Activated T-helper 2 cell treated with anti-CD3 and anti-CD28 coated beads, Interferon-gamma antibody, Interleukin-2, Interleukin-4, amounts not matched to agents 10 μg/mL and 5 μg/mL and 100 μg/mL, durations not matched to agents 14 hours and 24 hours and 36 hours (primary cell): ENCODE measurements at regions of chr11 and their contacts with region 1.

Region 1: DNA sequence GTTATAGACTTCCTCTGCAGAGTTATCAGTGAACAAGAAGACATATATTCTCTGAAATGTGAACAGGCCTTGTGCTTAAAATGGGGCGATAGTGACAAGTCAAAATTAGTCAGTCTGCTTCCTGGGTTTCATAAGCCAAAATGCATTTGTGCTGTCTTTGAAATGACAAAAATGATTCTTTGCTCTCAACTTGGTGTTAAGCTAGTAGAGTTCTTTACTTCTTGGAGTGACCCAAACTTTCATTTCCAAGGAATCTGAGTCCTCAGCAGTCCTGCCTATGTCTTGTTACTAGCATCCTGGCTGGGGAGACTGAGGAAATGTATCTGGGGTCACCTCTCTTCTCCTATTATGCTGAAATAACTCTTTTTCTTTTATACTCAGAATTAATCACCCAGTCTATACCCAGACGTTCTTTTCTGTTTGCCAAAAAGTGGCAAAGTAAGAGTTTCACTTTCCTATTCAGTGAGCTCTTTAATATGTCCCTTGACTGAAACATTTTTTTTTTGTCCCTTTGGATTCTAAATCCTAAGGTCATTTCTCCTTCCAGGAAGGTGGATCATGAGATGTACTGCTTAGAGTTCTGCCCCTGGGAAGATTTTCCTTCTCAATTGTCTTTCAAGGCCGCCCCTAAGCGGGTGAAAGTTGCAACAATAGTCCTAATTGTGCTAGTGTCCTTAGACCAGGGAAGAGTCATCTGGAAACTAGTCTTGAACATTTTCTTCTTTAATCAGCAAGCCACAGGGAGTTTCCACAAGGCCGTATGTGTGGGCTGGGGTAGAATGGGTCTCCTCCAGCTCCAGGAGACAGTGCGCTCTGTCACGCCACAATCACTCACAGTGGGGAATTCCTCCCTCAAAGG is 53.0 kb upstream of the RDX start:
- DNase-seq: peak; percentile 58
- H3K4me3 Mint-ChIP-seq: peak overlapping the region; percentile 61
- H3K27ac Mint-ChIP-seq: peak overlapping the region; percentile 96
- H3K4me1 Mint-ChIP-seq: peaks cover 66% of the 10 kb centered on the region
- H3K27me3 Mint-ChIP-seq: no peaks in the 10 kb centered on the region

Region 2: DNA sequence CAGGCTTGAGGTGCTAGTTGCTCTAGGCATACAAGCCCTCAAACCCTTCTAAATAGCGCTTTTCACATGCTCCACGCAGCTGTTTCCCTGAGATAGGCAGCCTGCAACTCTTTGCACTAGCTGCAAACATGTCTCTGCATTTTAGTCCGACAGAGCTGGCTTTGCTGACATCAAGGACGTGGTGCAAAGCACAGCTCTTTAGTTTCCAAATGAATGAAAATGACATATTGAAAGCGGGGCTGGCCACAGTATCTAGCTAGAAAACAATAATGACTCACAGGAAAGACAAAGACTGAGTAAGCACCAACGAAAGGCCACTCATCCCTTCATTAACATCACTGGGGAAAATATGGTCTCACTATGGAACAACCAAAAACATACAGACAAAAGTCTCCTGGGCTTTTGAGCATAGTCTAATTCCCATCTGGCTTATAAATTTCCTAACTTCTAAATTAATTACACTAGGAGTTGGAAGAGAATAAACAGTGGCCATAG is 271.5 kb before region 1 on chr11:
- intact Hi-C with region 1: loop called (anchors 2 kb)
- DNase-seq: peak; percentile 49
- H3K4me3 Mint-ChIP-seq: peak overlapping the region; percentile 47
- H3K27ac Mint-ChIP-seq: peak overlapping the region; percentile 96
- H3K4me1 Mint-ChIP-seq: peaks cover 40% of the 10 kb centered on the region
- H3K27me3 Mint-ChIP-seq: peaks cover 4% of the 10 kb centered on the region

Region 3: DNA sequence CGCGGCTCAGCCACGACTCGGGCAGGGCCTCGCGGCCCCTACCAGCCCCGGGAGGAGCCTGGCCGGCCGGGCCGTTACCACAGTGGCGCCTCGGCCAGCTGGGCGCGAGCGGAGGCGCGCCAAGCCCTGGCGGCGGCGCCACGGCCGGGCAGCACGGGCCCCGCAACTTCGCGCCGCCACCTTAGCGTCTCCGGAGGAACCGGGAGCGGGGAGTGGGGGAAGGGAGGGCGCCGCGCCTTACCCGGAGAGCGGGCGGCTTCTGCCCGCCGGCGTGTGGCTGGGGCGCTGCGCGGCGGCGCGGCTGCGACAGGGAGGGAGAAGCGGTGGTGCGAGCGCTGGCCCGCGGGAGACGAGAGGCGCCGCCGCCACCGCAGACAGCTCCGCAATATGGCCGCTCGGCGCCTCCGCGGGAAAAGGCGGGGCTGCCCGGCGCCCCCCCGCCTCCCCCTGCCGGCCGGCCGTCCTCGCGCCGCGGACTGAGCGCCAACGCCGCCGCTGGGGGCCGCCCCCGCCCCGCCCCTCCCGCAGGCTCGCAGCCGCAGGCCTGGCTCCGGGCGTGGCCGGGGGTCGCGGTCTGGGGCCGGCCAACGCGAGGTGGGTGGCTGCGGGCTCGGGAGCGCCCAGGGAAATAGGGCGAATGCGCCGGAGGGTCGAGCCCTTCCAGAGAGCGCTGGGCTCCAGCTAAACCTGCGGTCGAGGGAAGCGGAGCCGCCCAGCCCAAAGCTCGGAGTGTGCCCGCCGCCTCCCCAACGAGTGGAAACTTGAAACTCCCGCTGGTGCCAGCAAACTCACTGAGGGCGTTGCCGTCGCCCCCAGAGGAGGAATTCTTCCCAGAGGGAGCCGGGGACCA is 52.9 kb before region 1 on chr11 and contains the start of gene RDX:
- intact Hi-C with region 1: loop called (anchors 1 kb)
- DNase-seq: peak; percentile 56
- H3K4me3 Mint-ChIP-seq: peak within 1 kb of the TSS; percentile 95
- H3K27ac Mint-ChIP-seq: peak within 1 kb of the TSS; percentile 63
- H3K4me1 Mint-ChIP-seq: peaks cover 43% of the 10 kb centered on the region
- H3K27me3 Mint-ChIP-seq: no peaks in the 10 kb centered on the region
- total RNA-seq, gene RDX: 63.3 and 64.8 TPM in 2 replicates

Region 4: GRCh38 chr11:110327508-110327907 is 21.9 kb before region 1 on chr11:
- intact Hi-C with region 1: loop called (anchors 1 kb)
- DNase-seq: no peak
- H3K4me3 Mint-ChIP-seq: peak overlapping the region; percentile 87
- H3K27ac Mint-ChIP-seq: peak overlapping the region; percentile 89
- H3K4me1 Mint-ChIP-seq: peaks cover 34% of the 10 kb centered on the region
- H3K27me3 Mint-ChIP-seq: no peaks in the 10 kb centered on the region

Region 5: DNA sequence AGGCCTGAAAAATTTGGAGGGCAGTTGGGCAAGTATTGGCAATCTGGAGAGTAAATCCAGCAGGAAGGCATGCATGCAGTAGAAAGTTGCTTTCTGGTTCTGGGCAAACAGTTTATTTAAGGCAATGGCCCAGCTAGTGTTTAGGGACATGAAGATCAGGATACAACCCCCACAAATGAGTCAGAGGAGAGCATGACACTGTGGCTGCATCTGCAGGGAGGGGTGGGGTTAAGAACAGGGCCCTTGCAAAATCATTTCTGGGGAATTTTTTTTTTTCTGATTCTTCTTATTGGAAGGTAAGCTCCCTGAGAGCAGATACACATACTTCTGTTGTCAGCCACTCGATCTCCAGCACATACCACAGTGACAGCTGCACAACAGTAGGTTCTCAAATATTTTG is 141.5 kb after region 1 on chr11:
- intact Hi-C with region 1: no loop called
- DNase-seq: no peak
- H3K4me3 Mint-ChIP-seq: no peak overlapping the region
- H3K27ac Mint-ChIP-seq: no peak overlapping the region
- H3K4me1 Mint-ChIP-seq: peaks cover 3% of the 10 kb centered on the region
- H3K27me3 Mint-ChIP-seq: peaks cover 8% of the 10 kb centered on the region

Region 6: GRCh38 chr11:111378861-111379601 is 1029.7 kb after region 1 on chr11 and contains the start of gene POU2AF1:
- intact Hi-C with region 1: loop called (anchors 10 kb)
- DNase-seq: peak; percentile 68
- H3K4me3 Mint-ChIP-seq: peak within 1 kb of the TSS; percentile 80
- H3K27ac Mint-ChIP-seq: peak within 1 kb of the TSS; percentile 98
- H3K4me1 Mint-ChIP-seq: peaks cover 73% of the 10 kb centered on the region
- H3K27me3 Mint-ChIP-seq: no peaks in the 10 kb centered on the region
- total RNA-seq, gene POU2AF1: 35.2 and 37.2 TPM in 2 replicates